ENCODE measurements at regions of chr9 and their contacts with region 1.

Region 1: GRCh38 chr9:72292256-72292682 is 72.7 kb downstream of the ZFAND5 start:
- DNase-seq: peak; percentile 59
- ATAC-seq: peak; percentile 37
- H3K4me3 ChIP-seq: no peak overlapping the region
- H3K27ac ChIP-seq: no peak overlapping the region
- H3K4me1 ChIP-seq: peaks cover 10% of the 10 kb centered on the region
- H3K27me3 ChIP-seq: no peaks in the 10 kb centered on the region
- CTCF ChIP-seq: peak; percentile 58

Region 2: GRCh38 chr9:71562140-71562539 is 730.1 kb before region 1 on chr9:
- CTCF ChIA-PET with region 1: no interaction called
- POLR2A ChIA-PET with region 1: no interaction called
- intact Hi-C with region 1: no loop called
- DNase-seq: no peak
- ATAC-seq: no peak
- H3K4me3 ChIP-seq: no peak overlapping the region
- H3K27ac ChIP-seq: no peak overlapping the region
- H3K4me1 ChIP-seq: peaks cover 7% of the 10 kb centered on the region; the same call in 1 of the 2 replicates
- H3K27me3 ChIP-seq: peaks cover 42% of the 10 kb centered on the region; the same call in 1 of the 2 replicates
- CTCF ChIP-seq: no peak

Region 3: GRCh38 chr9:72193478-72193881 is 98.8 kb before region 1 on chr9:
- CTCF ChIA-PET with region 1: no interaction called
- POLR2A ChIA-PET with region 1: no interaction called
- intact Hi-C with region 1: no loop called
- DNase-seq: no peak
- ATAC-seq: no peak
- H3K4me3 ChIP-seq: no peak overlapping the region
- H3K27ac ChIP-seq: no peak overlapping the region
- H3K4me1 ChIP-seq: no peaks in the 10 kb centered on the region
- H3K27me3 ChIP-seq: no peaks in the 10 kb centered on the region
- CTCF ChIP-seq: no peak

Region 4: DNA sequence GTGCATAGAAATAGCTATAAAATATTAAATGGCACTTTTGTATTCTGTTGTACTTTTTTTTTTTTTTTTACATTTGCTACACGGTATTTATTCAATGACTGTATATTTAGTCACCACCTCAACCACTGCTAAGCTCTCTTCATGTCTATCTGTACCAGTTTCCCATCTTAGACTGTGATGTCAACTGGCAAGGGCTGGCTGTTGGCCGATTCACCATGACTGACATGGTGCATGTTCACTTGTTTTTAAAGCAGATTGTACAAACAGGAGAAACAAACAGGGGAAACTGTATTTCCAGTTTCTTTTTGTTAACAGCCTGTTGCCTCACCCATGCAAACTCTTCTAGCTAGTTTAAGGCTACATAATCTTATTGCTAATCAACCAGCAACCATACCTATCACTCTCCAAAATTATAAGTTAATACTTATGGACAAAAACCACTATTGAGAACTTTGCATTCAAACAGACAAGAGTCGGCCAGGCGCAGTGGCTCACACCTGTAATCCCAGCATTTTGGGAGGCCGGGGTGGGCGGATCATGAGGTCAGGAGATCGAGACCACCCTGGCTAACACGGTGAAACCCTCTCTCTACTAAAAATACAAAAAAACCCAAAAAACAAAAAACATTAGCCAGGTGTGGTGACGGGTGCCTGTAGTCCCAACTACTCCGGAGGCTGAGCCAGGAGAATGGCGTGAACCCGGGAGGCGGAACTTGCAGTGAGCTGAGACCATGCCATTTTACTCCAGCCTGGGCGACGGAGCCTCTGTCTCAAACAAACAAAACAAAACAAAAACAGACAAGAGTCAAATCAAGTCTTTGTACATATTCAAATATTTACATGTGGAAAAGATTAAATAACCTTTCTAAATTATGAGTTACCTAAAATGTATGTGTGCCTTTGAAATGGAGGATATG is 59.5 kb after region 1 on chr9:
- CTCF ChIA-PET with region 1: interaction called, 10 read pairs
- POLR2A ChIA-PET with region 1: no interaction called
- intact Hi-C with region 1: loop called (anchors 2 kb)
- DNase-seq: peak; percentile 84
- ATAC-seq: peak; percentile 99
- H3K4me3 ChIP-seq: no peak overlapping the region
- H3K27ac ChIP-seq: peak overlapping the region; percentile 39
- H3K4me1 ChIP-seq: peaks cover 20% of the 10 kb centered on the region
- H3K27me3 ChIP-seq: no peaks in the 10 kb centered on the region
- CTCF ChIP-seq: no peak

Region 5: GRCh38 chr9:72371151-72371550 is 78.9 kb after region 1 on chr9:
- CTCF ChIA-PET with region 1: no interaction called
- POLR2A ChIA-PET with region 1: interaction called, 12 read pairs
- intact Hi-C with region 1: no loop called
- DNase-seq: no peak
- ATAC-seq: no peak
- H3K4me3 ChIP-seq: no peak overlapping the region
- H3K27ac ChIP-seq: no peak overlapping the region
- H3K4me1 ChIP-seq: no peaks in the 10 kb centered on the region
- H3K27me3 ChIP-seq: no peaks in the 10 kb centered on the region
- CTCF ChIP-seq: no peak

Region 6: GRCh38 chr9:72476617-72477375 is 184.5 kb after region 1 on chr9:
- CTCF ChIA-PET with region 1: no interaction called
- POLR2A ChIA-PET with region 1: no interaction called
- intact Hi-C with region 1: loop called (anchors 5 kb)
- DNase-seq: peak; percentile 97
- ATAC-seq: peak; percentile 91
- H3K4me3 ChIP-seq: no peak overlapping the region
- H3K27ac ChIP-seq: peak overlapping the region; percentile 58
- H3K4me1 ChIP-seq: peaks cover 45% of the 10 kb centered on the region
- H3K27me3 ChIP-seq: no peaks in the 10 kb centered on the region
- CTCF ChIP-seq: no peak